Panc1 (cell line): ENCODE measurements at regions of chr15 and their contacts with region 1.

Region 1: GRCh38 chr15:33608714-33609113 is 297.9 kb downstream of the RYR3 start:
- DNase-seq: no peak
- ATAC-seq: no peak
- H3K4me3 ChIP-seq: no peak overlapping the region
- H3K27ac ChIP-seq: no peak overlapping the region
- H3K4me1 ChIP-seq: no peaks in the 10 kb centered on the region
- H3K27me3 ChIP-seq: peaks cover under 1% of the 10 kb centered on the region; the same call in 1 of the 2 replicates
- CTCF ChIP-seq: peak; percentile 39

Region 2: DNA sequence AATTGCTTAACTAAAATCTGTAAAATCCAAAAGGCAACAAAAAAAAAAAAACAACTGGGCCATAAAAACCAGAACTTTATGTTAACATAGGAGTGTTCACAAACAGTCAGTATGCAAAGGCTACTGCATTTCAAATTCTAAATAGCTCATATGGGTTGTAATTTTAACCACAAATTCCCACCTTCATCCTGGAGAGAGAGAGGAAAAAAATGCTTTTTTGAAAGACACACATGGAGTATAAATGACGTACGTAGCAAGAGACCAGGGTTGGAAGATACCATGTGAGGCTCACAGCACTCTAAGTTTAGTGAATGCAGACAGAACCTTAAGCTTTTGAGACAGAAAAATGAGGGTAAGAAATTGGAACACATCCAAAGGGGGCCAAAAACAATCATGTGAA is 530.1 kb before region 1 on chr15:
- CTCF ChIA-PET with region 1: interaction called, 15 read pairs
- POLR2A ChIA-PET with region 1: no interaction called
- in situ Hi-C with region 1: no loop called
- intact Hi-C with region 1: no loop called
- DNase-seq: no peak
- ATAC-seq: no peak
- H3K4me3 ChIP-seq: no peak overlapping the region
- H3K27ac ChIP-seq: no peak overlapping the region
- H3K4me1 ChIP-seq: no peaks in the 10 kb centered on the region
- H3K27me3 ChIP-seq: no peaks in the 10 kb centered on the region
- CTCF ChIP-seq: no peak

Region 3: GRCh38 chr15:33742800-33743199 is 134.1 kb after region 1 on chr15:
- CTCF ChIA-PET with region 1: no interaction called
- POLR2A ChIA-PET with region 1: no interaction called
- in situ Hi-C with region 1: no loop called
- intact Hi-C with region 1: no loop called
- DNase-seq: no peak
- ATAC-seq: no peak
- H3K4me3 ChIP-seq: no peak overlapping the region
- H3K27ac ChIP-seq: no peak overlapping the region
- H3K4me1 ChIP-seq: no peaks in the 10 kb centered on the region
- H3K27me3 ChIP-seq: no peaks in the 10 kb centered on the region
- CTCF ChIP-seq: no peak